RWPE1 (cell line): ENCODE measurements at regions of chr13 and their contacts with region 1.

Region 1: DNA sequence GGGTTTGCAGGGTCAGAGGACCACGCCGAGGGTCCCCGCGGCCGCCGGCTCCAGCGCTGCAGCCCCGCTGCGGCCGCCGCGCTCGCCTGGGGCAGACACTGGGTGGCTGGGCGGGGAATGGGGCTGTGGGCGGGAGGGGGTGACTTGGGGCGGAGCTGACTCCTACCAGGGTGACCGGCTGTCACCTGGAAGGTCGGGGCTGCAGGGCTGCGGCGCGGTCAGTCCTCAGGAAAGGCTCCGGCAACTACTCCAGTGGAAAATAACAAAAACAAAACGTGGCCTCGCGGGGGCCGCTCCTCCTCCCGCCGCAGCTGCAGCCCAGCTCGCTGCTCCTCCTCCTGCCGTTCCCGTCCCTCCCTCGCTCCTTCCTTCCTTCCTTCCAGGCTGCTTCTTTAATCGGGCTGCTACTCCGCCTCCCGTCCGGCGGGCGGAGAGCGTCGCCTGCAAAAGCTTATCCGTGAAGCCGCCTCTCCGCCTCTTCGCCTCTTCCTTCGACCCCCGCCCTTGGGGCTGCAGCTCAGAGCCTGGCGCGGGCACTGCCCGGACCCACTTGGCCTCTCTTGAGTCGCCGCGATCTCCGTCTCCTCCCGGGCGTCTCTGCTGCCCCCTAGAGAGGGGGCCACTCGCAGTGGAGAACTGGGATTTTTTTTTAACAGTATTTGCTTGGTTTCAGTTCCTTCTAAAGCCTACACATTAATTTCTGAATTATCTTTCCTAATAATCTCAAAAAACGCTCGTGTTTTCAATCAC is at the start of gene TBC1D4:
- DNase-seq: peak; percentile 68
- H3K27ac ChIP-seq: peak within 1 kb of the TSS; percentile 89
- CTCF ChIP-seq: peak; percentile 94

Region 2: GRCh38 chr13:75372517-75372916 is 109.7 kb before region 1 on chr13:
- CTCF ChIA-PET with region 1: interaction called, 12 read pairs
- POLR2A ChIA-PET with region 1: no interaction called
- DNase-seq: peak; percentile 50
- H3K27ac ChIP-seq: no peak overlapping the region
- CTCF ChIP-seq: peak; percentile 78

Region 3: GRCh38 chr13:75492389-75492788 is 10.1 kb after region 1 on chr13:
- CTCF ChIA-PET with region 1: interaction called, 13 read pairs
- POLR2A ChIA-PET with region 1: no interaction called
- DNase-seq: no peak
- H3K27ac ChIP-seq: no peak overlapping the region
- CTCF ChIP-seq: no peak